RWPE1 (cell line): ENCODE measurements at regions of chr10 and their contacts with region 1.

Region 1: DNA sequence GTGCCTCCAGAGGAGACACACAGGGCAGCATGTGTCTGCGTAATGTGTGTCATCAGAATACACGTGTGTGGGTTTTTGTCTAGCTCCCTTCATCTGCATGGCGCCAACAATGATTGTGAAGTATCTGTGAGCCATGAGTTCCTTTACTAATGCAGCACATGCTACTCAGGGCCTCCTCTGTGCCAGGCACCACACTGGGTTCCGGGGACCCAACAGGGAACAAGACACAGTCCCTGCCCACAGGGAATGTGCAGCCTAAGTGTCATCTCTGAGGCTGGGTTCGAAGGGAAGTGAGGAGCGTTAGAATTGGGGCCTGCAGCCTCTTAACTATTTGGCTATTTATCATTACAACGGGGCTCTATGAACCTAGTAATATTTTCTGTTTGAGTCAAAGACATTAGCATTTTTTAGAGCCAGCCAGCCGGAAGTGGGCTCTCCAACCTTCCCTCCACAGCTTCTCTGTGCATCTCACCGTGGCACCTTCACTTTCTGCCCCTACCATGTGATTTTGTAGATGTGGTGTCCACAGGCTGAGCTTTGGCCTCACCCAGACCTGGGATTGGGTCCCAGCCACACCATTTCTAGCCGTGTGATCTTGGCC is 43.9 kb upstream of the SRGN start:
- DNase-seq: no peak
- H3K27ac ChIP-seq: peak overlapping the region; percentile 31
- CTCF ChIP-seq: no peak

Region 2: GRCh38 chr10:70158113-70158512 is 1114.1 kb after region 1 on chr10:
- CTCF ChIA-PET with region 1: no interaction called
- POLR2A ChIA-PET with region 1: interaction called, 10 read pairs
- DNase-seq: no peak
- H3K27ac ChIP-seq: no peak overlapping the region
- CTCF ChIP-seq: no peak